OCI-LY7 (cell line): ENCODE measurements at regions of chr16 and their contacts with region 1.

Region 1: DNA sequence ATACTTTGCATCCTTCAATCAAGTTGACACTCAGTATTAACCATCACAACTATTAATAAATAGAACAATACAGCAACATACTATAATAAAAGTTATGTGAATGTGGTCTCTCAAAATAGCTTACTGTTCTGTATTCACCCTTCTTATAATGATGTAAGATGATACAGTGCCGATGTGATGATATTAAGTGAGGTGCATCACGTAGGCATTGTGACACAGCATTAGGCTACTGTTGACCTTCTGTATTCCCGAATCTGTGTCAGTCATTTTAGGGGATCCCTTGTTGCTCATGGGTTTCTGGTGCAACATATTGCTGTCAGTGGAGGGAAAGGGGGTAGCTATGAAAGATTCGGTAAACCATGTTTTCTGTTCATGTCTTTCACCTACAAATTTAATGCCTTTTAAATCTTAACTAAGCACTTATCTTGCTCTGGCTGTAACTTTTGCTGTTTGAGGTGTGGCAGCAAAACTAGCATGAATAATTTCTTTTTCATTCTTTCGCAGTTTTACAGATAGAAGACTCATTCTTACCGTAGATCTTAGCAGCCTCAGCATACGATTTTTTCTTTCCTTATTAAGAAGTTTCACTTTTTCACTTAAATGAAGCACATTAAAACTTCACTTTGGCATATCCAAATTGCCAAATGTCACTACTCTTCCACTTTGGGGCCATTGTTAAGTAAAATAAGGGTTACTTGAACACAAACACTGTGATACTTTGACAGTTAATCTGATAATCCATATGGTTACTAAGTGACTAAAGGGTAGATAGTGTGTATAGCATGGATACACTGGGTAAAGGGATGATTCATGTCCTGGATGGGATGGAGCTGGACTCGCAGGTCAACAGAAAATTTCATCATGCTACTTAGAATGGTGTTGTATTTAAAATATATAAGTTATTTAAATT is 29.6 kb downstream of the NFAT5 start:
- DNase-seq: no peak
- H3K4me3 ChIP-seq: no peak overlapping the region
- H3K27ac ChIP-seq: no peak overlapping the region
- H3K4me1 ChIP-seq: no peaks in the 10 kb centered on the region
- CTCF ChIP-seq: no peak

Region 2: DNA sequence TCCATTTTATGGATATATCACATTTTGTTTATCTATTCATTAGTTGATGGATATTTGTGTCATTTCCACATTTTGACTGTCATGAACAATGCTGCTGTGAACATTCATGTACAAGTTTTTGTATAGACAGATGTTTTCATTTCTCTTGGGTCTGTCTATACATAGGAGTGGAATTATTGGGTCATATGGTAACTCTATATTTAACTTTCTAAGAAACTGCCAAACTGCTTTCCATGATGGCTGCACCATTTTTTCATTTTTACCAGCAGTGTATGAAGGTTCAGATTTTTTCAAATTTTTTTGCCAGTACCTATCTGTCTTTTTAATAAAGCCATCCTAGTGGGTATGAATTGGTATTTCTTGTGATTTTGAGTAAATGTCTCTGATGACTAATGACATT is 14.1 kb before region 1 on chr16:
- CTCF ChIA-PET with region 1: no interaction called
- POLR2A ChIA-PET with region 1: interaction called, 11 read pairs
- intact Hi-C with region 1: no loop called
- DNase-seq: no peak
- H3K4me3 ChIP-seq: no peak overlapping the region
- H3K27ac ChIP-seq: no peak overlapping the region
- H3K4me1 ChIP-seq: peaks cover 16% of the 10 kb centered on the region
- CTCF ChIP-seq: no peak